Naive thymus-derived CD4-positive, alpha-beta T cell (primary cell): ENCODE measurements at regions of chr10 and their contacts with region 1.

Region 1: DNA sequence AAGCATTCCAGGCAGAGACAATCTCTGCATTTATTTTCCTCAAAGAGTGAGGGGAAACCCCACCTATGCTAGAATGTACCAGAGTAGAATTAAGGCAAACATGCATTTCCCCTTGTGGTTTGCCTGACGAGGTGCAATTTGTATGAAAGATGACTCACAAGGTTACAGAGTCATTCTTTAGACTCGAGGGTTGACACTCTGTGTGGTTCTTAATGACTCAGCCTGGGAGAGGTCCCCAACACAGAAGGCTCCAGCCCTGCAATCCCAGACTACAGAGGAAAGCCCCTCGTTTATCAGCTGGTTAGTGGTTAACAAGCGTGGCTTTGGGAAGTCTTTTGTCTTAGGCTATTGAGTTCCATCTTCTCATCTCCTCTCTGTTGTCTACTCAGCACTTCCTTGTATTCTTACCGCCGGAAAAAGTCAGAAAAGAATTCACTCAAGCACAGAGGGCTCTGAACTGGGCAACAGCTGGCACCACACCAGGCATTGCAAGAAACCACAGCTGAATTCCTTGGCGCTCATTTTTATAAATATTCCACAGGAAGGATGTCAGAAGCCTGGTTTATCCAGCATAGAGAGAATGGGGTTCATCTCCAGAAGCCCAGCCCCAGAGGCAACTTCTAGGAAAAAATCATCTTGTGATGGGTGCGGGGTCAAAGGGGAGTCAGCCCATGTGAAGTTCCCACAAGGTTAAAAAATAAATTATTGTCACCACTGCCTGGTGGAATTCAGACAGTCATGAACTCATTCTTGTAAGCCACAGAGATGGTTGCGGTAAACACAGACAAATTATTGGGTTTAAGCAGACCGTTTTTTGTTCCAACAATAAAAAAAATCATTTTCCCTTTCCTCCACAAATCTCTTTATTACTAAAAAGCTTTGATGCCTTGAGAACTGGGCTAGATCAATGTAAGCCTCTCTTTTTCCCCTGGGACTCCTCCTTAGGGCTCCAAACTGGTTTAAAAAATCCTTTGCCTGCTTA is 24.5 kb upstream of the SVIL start:
- DNase-seq: peak in 8 of 9 donors; percentile 34 to 82 (median 48)
- ATAC-seq: peak; percentile 97
- H3K4me3 ChIP-seq: peak overlapping the region; percentile 12
- H3K4me3 Mint-ChIP-seq: peak overlapping the region; percentile 39 to 81 (median 64)
- H3K27ac ChIP-seq: peak overlapping the region; percentile 2
- H3K27ac Mint-ChIP-seq: peak overlapping the region; percentile 3 to 84 (median 58)
- H3K4me1 ChIP-seq: peaks cover 14 to 30% of the 10 kb centered on the region in 2 donors
- H3K4me1 Mint-ChIP-seq: peaks cover 21 to 51% (median 29%) of the 10 kb centered on the region in 7 donors
- H3K27me3 ChIP-seq: no peaks in the 10 kb centered on the region
- H3K27me3 Mint-ChIP-seq: peaks cover 0 to 49% (median 0%) of the 10 kb centered on the region in 5 donors

Region 2: GRCh38 chr10:29648114-29648982 is 10.9 kb before region 1 on chr10:
- CTCF ChIA-PET with region 1: interaction called, 4 read pairs
- POLR2A ChIA-PET with region 1: interaction called, 5 read pairs
- intact Hi-C with region 1: loop called in 1 of 2 experiments (anchors 1 kb)
- DNase-seq: peak in 7 of 9 donors; percentile 19 to 45 (median 31)
- ATAC-seq: peak; percentile 60
- H3K4me3 ChIP-seq: no peak overlapping the region
- H3K4me3 Mint-ChIP-seq: peak overlapping the region; percentile 21 to 93 (median 72)
- H3K27ac ChIP-seq: no peak overlapping the region
- H3K27ac Mint-ChIP-seq: peak overlapping the region; percentile 68 to 92 (median 76)
- H3K4me1 ChIP-seq: peaks cover 0 to 25% of the 10 kb centered on the region in 2 donors
- H3K4me1 Mint-ChIP-seq: peaks cover 27 to 75% (median 65%) of the 10 kb centered on the region in 7 donors
- H3K27me3 ChIP-seq: no peaks in the 10 kb centered on the region
- H3K27me3 Mint-ChIP-seq: peaks cover 0 to 19% (median 0%) of the 10 kb centered on the region in 5 donors

Region 3: DNA sequence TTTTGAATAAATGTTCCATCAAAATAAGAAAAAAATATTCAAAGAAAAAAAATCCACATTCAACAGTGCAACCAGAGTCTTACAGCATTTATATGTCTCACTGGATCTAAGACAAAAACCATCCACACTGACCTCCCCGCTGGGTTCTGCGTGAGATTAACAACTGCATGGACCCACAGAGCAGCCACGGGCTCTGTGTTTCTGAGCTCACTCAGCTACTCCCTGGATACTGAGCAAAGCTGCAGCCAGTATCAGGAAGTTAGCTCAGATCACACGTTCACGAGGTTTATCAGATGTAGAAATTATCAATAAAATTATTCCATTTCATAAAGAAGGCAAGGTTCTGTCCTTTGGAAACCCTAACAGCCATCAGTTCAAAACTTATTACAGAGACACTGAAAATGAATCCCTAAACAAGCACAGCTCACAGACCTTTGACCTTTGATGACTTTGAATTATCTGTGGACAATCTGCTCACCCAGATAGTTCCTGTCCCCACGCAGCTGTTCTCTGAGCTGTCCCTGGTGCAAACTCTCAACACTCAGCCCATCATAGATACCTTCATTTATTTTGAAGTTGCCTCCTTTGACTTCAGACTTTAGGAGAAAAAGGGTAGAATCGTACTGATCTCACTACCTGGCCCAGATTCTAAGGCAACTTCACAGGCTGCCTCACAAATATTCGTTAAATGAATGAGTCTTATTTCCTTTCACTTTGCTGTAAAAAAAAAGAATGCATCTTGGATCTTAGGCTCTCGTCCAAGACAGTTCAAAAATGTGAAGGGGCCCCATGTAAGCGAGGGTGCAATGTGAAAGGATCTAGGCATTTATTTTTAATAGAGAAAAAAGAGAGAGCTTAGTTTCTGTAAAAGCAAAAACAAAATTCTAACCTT is 43.2 kb after region 1 on chr10:
- CTCF ChIA-PET with region 1: no interaction called
- POLR2A ChIA-PET with region 1: no interaction called
- intact Hi-C with region 1: loop called in 1 of 2 experiments (anchors 1 kb)
- DNase-seq: peak in 4 of 9 donors; percentile 12 to 32 (median 18)
- ATAC-seq: peak; percentile 66
- H3K4me3 ChIP-seq: peak overlapping the region; percentile 37
- H3K4me3 Mint-ChIP-seq: peak overlapping the region; percentile 66 to 90 (median 79)
- H3K27ac ChIP-seq: peak overlapping the region; percentile 68
- H3K27ac Mint-ChIP-seq: peak overlapping the region; percentile 72 to 92 (median 89)
- H3K4me1 ChIP-seq: peaks cover 7 to 27% of the 10 kb centered on the region in 2 donors
- H3K4me1 Mint-ChIP-seq: peaks cover 22 to 81% (median 60%) of the 10 kb centered on the region in 7 donors
- H3K27me3 ChIP-seq: no peaks in the 10 kb centered on the region
- H3K27me3 Mint-ChIP-seq: no peaks in the 10 kb centered on the region

Region 4: GRCh38 chr10:29828440-29828894 is 169.2 kb after region 1 on chr10:
- CTCF ChIA-PET with region 1: no interaction called
- POLR2A ChIA-PET with region 1: no interaction called
- intact Hi-C with region 1: no loop called
- DNase-seq: no peak
- ATAC-seq: no peak
- H3K4me3 ChIP-seq: no peak overlapping the region
- H3K4me3 Mint-ChIP-seq: no peak overlapping the region
- H3K27ac ChIP-seq: no peak overlapping the region
- H3K27ac Mint-ChIP-seq: peak overlapping the region in 1 of 9 donors; percentile 52
- H3K4me1 ChIP-seq: no peaks in the 10 kb centered on the region
- H3K4me1 Mint-ChIP-seq: peaks cover 0 to 7% (median 0%) of the 10 kb centered on the region in 7 donors
- H3K27me3 ChIP-seq: no peaks in the 10 kb centered on the region
- H3K27me3 Mint-ChIP-seq: peaks cover 0 to 8% (median 4%) of the 10 kb centered on the region in 5 donors